Transverse colon (tissue), 4 donors: ENCODE measurements at regions of chr2 and their contacts with region 1.

Region 1: GRCh38 chr2:17628349-17629261 is 88.1 kb downstream of the VSNL1 start:
- DNase-seq: no peak
- H3K4me3 ChIP-seq: no peak overlapping the region
- H3K27ac ChIP-seq: no peak overlapping the region
- H3K4me1 ChIP-seq: no peaks in the 10 kb centered on the region
- H3K27me3 ChIP-seq: no peaks in the 10 kb centered on the region
- CTCF ChIP-seq: no peak
- EP300 ChIP-seq: no peak
- POLR2A ChIP-seq: no peak

Region 2: DNA sequence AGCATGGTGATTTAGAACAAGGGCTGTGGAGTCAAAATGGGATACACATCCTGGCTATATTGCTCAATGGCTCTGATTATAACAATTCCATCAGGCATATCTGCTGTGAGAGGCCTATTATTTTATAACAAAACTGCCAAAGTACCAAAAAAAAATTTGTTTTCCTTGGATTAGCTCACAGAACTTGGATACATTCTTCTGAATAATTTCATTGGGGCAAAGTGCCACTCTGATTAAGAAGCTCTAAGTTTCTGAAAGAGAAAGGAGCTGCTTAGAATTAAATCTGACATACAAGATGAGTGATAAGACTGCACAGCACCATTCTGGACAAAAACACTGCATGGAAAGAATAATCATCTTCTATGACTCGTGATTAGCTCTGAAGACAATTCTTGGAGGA is 39.3 kb after region 1 on chr2:
- in situ Hi-C with region 1: no loop called
- intact Hi-C with region 1: loop called (anchors 1 kb)
- DNase-seq: no peak
- H3K4me3 ChIP-seq: no peak overlapping the region
- H3K27ac ChIP-seq: no peak overlapping the region
- H3K4me1 ChIP-seq: no peaks in the 10 kb centered on the region
- H3K27me3 ChIP-seq: no peaks in the 10 kb centered on the region
- CTCF ChIP-seq: no peak
- EP300 ChIP-seq: no peak
- POLR2A ChIP-seq: no peak

Region 3: GRCh38 chr2:17780546-17780945 is 151.9 kb after region 1 on chr2:
- in situ Hi-C with region 1: no loop called
- intact Hi-C with region 1: no loop called
- DNase-seq: no peak
- H3K4me3 ChIP-seq: no peak overlapping the region
- H3K27ac ChIP-seq: no peak overlapping the region
- H3K4me1 ChIP-seq: no peaks in the 10 kb centered on the region
- H3K27me3 ChIP-seq: no peaks in the 10 kb centered on the region
- CTCF ChIP-seq: no peak
- EP300 ChIP-seq: no peak
- POLR2A ChIP-seq: no peak

Region 4: GRCh38 chr2:18077704-18078103 is 449.1 kb after region 1 on chr2:
- in situ Hi-C with region 1: no loop called
- intact Hi-C with region 1: no loop called
- DNase-seq: no peak
- H3K4me3 ChIP-seq: no peak overlapping the region
- H3K27ac ChIP-seq: no peak overlapping the region
- H3K4me1 ChIP-seq: no peaks in the 10 kb centered on the region
- H3K27me3 ChIP-seq: no peaks in the 10 kb centered on the region
- CTCF ChIP-seq: no peak
- EP300 ChIP-seq: no peak
- POLR2A ChIP-seq: no peak